Activated CD4-positive, alpha-beta memory T cell treated with anti-CD3 and anti-CD28 coated beads, Interleukin-2, amount 10 ng/mL, durations not matched to agents 7 days and 5 days (primary cell): ENCODE measurements at regions of chr16 and their contacts with region 1.

Region 1: DNA sequence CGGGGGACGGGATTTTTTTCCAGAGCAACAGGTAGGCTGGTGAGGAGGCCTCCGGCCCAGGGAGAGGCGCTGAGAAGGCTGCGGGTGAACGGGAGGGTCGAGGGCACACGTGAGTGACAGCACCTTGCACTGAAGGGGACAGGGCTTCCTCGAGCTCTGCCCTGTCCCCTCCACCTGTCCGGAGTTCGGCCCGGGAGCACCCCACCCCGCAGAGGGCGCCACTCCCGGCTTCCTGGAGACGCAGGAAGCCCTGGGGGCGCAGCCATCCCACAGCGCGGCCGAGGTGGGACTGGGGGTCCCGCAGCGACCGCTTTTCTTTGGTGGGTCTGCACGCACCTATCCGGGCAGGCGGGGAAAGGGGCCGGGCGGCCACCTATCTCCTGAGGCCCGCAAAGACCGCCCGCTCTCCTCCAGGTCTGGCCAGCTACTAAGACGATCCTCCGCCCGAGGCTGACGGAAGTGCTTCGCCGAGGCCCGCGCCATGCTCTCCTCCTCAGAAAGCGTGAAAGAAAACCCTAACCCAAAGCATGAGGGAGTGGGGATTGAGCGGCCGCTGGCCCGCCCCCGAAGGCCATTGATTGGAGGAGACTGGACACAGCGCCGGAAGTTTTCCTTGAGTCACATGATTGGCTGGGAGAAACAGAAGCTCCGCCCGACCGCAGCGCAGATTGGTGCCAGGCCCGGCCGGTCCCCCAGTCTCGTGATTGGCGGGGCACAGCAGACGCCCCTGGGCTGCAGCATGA is 34.3 kb downstream of the DDX19A start:
- DNase-seq: peak; percentile 98
- H3K4me3 Mint-ChIP-seq: peak overlapping the region; percentile 94
- H3K27ac Mint-ChIP-seq: peak overlapping the region; percentile 96
- H3K4me1 Mint-ChIP-seq: peaks cover 21% of the 10 kb centered on the region
- H3K27me3 Mint-ChIP-seq: no peaks in the 10 kb centered on the region

Region 2: DNA sequence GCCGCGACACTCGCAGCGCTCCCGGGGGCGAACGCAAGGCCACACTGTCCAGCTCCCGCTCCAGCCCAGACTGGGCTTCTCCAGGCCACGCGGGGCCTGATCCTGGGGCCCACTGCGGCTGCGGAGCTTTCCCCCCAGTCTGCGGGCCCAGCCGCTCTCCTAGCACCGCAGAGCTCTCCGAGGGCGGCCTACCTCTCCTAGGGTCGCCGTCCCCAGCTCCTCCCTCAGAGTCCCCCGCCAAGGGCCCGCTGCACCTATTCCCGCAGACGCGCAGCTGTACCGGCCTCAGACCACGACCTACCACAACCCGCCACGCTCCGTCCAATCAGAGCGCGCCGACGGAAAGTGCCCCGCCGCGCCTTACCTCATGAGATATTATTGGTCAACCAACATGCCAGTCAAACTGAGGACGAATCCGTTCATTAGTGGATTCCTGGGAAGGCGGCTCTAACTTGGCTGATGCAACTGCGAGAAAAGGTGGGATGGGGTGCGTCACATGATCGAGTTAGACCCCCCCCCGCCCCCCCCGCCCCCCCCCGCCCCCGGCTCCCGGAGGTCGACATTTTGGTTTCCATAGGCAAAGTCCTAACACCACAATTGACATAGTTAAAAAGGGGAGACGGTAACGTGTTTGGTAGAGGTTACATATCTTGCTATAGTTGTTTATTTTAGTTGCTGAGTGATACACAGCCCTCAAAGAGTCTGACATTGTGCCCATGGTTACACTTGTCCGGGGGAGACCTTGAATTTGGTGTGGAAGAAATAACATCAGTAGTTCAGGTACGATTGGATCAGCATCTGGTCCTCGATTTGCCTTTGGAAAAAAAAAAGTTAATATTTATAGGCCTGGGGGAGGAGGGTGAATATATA is 91.6 kb before region 1 on chr16 and contains the start of gene AARS1:
- CTCF ChIA-PET with region 1: no interaction called
- POLR2A ChIA-PET with region 1: interaction called, 13 read pairs
- DNase-seq: peak; percentile 96
- H3K4me3 Mint-ChIP-seq: peak within 1 kb of the TSS; percentile 99
- H3K27ac Mint-ChIP-seq: peak within 1 kb of the TSS; percentile 98
- H3K4me1 Mint-ChIP-seq: peaks cover 32% of the 10 kb centered on the region
- H3K27me3 Mint-ChIP-seq: no peaks in the 10 kb centered on the region
- total RNA-seq, gene AARS1: 128 to 129 TPM

Region 3: GRCh38 chr16:70364399-70364798 is 16.6 kb before region 1 on chr16:
- CTCF ChIA-PET with region 1: interaction called, 28 read pairs
- POLR2A ChIA-PET with region 1: interaction called, 12 read pairs
- DNase-seq: no peak
- H3K4me3 Mint-ChIP-seq: no peak overlapping the region
- H3K27ac Mint-ChIP-seq: peak overlapping the region; percentile 6
- H3K4me1 Mint-ChIP-seq: peaks cover 4% of the 10 kb centered on the region
- H3K27me3 Mint-ChIP-seq: no peaks in the 10 kb centered on the region

Region 4: GRCh38 chr16:70395345-70395901 is 14.4 kb after region 1 on chr16:
- CTCF ChIA-PET with region 1: interaction called, 19 read pairs
- POLR2A ChIA-PET with region 1: interaction called, 46 read pairs
- DNase-seq: peak; percentile 68
- H3K4me3 Mint-ChIP-seq: no peak overlapping the region
- H3K27ac Mint-ChIP-seq: no peak overlapping the region
- H3K4me1 Mint-ChIP-seq: peaks cover 6% of the 10 kb centered on the region
- H3K27me3 Mint-ChIP-seq: no peaks in the 10 kb centered on the region

Region 5: GRCh38 chr16:70428178-70428998 is 47.4 kb after region 1 on chr16:
- CTCF ChIA-PET with region 1: interaction called, 3 read pairs
- POLR2A ChIA-PET with region 1: interaction called, 10 read pairs
- DNase-seq: peak; percentile 63
- H3K4me3 Mint-ChIP-seq: no peak overlapping the region
- H3K27ac Mint-ChIP-seq: peak overlapping the region; percentile 34
- H3K4me1 Mint-ChIP-seq: peaks cover 38% of the 10 kb centered on the region
- H3K27me3 Mint-ChIP-seq: no peaks in the 10 kb centered on the region

Region 6: DNA sequence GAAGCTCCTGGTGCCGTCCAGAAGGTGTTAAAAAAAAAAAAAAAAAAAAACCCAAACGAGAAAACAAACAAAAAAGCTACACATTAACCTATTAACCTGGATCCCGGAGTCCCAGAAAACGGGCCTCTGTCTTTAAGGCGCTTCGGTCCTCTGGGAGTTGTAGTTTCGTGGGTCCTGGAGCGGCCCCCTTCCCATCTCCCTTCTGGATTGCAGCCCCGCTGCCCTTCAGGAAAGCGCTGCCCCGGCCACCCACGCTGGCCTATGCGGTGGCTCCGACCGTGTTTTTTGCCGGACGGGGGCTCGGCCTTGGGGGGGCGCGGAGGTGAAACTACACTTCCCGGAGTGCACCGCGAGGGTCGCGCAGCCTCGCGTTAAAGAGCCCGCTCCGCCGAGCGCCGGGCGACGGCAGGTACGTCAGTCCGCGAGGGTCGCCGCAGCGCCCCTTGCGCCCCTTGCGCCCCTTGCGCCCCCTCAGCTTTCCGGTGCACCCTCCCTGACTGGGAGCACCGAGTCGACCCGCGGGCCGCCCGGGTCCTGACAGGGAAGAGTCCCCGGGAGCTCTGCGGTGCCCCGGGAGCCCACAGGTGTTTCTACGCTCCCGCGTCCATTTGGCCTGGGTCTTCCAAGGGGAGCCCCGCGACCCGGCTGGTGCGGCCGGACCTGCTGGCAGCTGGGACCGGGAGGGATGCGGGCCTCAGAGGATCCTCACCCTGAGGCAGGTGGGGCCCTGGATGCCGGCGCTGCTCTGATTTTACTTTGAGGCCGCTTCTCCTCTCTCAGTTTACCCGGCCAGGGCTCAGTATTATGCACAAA is 73.4 kb after region 1 on chr16 and contains the start of gene FCSK:
- CTCF ChIA-PET with region 1: interaction called, 5 read pairs
- POLR2A ChIA-PET with region 1: interaction called, 17 read pairs
- DNase-seq: peak; percentile 68
- H3K4me3 Mint-ChIP-seq: peak within 1 kb of the TSS; percentile 87
- H3K27ac Mint-ChIP-seq: peak within 1 kb of the TSS; percentile 79
- H3K4me1 Mint-ChIP-seq: peaks cover 18% of the 10 kb centered on the region
- H3K27me3 Mint-ChIP-seq: no peaks in the 10 kb centered on the region
- total RNA-seq, gene FCSK: 17.3 to 17.4 TPM

Region 7: GRCh38 chr16:70523076-70523742 is 142.2 kb after region 1 on chr16 and contains the start of gene COG4:
- CTCF ChIA-PET with region 1: interaction called, 10 read pairs
- POLR2A ChIA-PET with region 1: interaction called, 82 read pairs
- DNase-seq: peak; percentile 92
- H3K4me3 Mint-ChIP-seq: peak within 1 kb of the TSS; percentile 93
- H3K27ac Mint-ChIP-seq: peak within 1 kb of the TSS; percentile 95
- H3K4me1 Mint-ChIP-seq: peaks cover 45% of the 10 kb centered on the region
- H3K27me3 Mint-ChIP-seq: no peaks in the 10 kb centered on the region
- total RNA-seq, gene COG4: 71.2 to 71.4 TPM

Region 8: GRCh38 chr16:70553645-70554044 is 172.6 kb after region 1 on chr16:
- CTCF ChIA-PET with region 1: no interaction called
- POLR2A ChIA-PET with region 1: no interaction called
- DNase-seq: no peak
- H3K4me3 Mint-ChIP-seq: no peak overlapping the region
- H3K27ac Mint-ChIP-seq: no peak overlapping the region
- H3K4me1 Mint-ChIP-seq: peaks cover 7% of the 10 kb centered on the region
- H3K27me3 Mint-ChIP-seq: no peaks in the 10 kb centered on the region